CD4-positive, alpha-beta memory T cell (primary cell): ENCODE measurements at regions of chr7 and their contacts with region 1.

Region 1: DNA sequence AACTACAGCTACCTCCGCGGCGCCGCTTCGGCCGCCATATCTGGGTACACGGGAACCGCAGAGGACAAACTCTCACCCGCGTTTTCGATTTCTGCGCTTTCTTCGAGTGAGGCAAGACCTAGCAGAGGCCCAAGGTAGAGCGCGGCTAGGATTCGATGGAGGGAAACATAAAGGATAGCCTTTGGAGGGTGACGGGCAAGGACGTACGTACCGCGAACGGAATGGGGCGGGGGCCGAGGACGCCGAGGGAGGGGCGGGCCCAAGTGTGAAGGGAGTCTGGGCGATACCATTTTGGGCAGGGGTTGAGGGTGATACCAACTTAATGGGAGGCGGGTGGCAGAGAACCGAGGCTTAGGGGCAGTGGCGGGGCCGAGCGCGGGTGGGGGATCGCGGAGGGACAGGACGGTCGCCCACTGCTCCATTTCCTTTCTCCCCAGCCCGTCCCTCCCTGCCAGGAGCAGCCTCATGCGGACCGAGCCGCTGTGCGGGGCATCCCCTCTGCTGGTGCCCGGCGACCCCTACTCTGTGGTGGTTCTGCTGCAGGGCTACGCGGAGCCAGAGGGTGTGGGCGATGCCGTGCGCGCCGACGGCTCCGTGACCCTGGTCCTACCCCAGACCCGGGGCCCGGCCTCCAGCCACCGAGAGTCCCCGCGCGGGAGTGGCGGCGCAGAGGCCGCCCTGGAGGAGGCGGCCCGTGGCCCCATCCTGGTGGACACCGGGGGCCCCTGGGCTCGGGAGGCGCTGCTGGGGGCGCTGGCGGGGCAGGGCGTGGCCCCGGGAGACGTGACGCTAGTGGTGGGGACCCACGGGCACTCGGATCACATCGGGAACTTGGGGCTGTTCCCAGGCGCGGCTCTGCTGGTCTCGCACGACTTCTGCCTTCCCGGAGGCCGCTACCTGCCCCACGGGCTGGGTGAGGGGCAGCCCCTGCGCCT is at the start of gene MBLAC1:
- DNase-seq: peak; percentile 92 to 94 (median 93)
- H3K4me3 ChIP-seq: peak within 1 kb of the TSS; percentile 94 to 98
- H3K4me3 Mint-ChIP-seq: peak within 1 kb of the TSS; percentile 96 to 100 (median 99)
- H3K27ac ChIP-seq: peak within 1 kb of the TSS; percentile 87
- H3K27ac Mint-ChIP-seq: peak within 1 kb of the TSS; percentile 98 to 100 (median 100)
- H3K4me1 ChIP-seq: peaks cover 43% of the 10 kb centered on the region
- H3K4me1 Mint-ChIP-seq: peaks cover 20 to 46% (median 26%) of the 10 kb centered on the region in 4 donors
- H3K27me3 ChIP-seq: no peaks in the 10 kb centered on the region
- H3K27me3 Mint-ChIP-seq: no peaks in the 10 kb centered on the region
- total RNA-seq, gene MBLAC1: 6.4 to 6.8 TPM

Region 2: DNA sequence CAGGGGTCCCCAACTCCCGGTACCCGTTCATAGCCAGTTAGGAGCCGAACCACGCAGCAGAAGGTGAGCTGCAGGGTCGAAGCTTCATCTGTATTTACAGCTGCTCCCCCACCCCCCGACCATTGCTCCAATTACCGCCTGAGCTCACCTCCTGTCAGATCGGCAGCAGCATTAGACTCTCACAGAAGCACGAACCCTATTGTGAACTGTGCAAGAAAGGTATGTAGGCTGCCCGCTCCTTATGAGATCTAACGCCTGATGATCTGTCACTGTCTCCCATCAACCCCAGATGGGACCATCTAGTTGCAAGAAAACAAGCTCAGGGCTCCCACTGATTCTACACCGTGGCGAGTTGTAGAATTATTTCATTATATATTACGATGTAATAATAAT is 136.7 kb before region 1 on chr7:
- CTCF ChIA-PET with region 1: interaction called, 56 read pairs
- POLR2A ChIA-PET with region 1: interaction called, 4 read pairs
- intact Hi-C with region 1: no loop called
- DNase-seq: peak in 1 of 5 donors; percentile 2
- H3K4me3 ChIP-seq: no peak overlapping the region
- H3K4me3 Mint-ChIP-seq: no peak overlapping the region
- H3K27ac ChIP-seq: no peak overlapping the region
- H3K27ac Mint-ChIP-seq: no peak overlapping the region
- H3K4me1 ChIP-seq: peaks cover 3% of the 10 kb centered on the region
- H3K4me1 Mint-ChIP-seq: peaks cover 0 to 6% (median 4%) of the 10 kb centered on the region in 4 donors
- H3K27me3 ChIP-seq: no peaks in the 10 kb centered on the region
- H3K27me3 Mint-ChIP-seq: peaks cover 2 to 5% of the 10 kb centered on the region in 2 donors

Region 3: DNA sequence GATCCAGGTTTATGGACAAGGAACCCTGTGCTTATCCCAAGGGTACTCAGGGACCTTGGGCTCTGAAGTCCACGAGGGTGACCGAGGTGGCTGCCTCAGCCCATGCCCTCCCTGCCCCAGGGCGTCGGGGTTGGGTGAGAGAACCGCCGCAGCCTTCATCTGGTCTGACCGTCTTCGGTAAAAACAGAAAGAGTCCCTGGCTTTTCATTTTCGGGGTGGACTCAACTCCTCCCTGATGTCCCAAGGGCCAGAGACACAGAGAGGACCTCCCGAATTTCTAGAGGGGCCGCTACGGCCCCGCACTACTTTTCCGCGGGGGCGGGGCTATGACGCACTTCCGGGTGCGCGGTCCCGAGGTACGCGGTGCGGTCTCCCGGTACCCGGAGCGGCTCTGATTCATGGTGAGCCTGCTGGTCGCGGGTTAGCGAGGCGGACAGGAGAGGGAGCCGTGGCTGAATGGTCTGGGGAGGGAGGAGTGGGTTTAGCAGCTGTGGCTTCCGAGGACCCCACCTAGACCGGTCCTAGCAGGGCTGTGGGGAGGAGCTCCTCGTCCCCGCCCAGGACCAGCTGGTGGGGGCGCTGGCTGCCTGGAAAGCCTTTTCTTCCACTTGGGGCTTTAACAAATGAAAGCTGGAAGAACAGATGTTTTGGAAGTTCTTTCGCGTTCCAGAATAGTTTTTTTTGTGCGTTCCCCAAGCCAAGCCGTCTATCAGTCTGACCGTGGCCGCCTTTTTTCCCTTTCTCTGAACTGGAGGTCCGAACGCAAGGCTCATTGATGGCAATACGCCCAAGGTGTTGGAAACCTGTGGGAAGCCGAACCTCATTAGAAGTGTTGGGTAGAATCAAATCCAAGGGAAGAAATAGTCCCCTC is 77.5 kb before region 1 on chr7 and contains the start of gene ZSCAN21:
- CTCF ChIA-PET with region 1: interaction called, 7 read pairs
- POLR2A ChIA-PET with region 1: no interaction called
- intact Hi-C with region 1: loop called (anchors 2 kb)
- DNase-seq: peak; percentile 76 to 82 (median 77)
- H3K4me3 ChIP-seq: peak within 1 kb of the TSS; percentile 67 to 94
- H3K4me3 Mint-ChIP-seq: peak within 1 kb of the TSS; percentile 91 to 97 (median 94)
- H3K27ac ChIP-seq: peak within 1 kb of the TSS; percentile 83
- H3K27ac Mint-ChIP-seq: peak within 1 kb of the TSS; percentile 91 to 98 (median 97)
- H3K4me1 ChIP-seq: peaks cover 13% of the 10 kb centered on the region
- H3K4me1 Mint-ChIP-seq: peaks cover 11 to 28% (median 18%) of the 10 kb centered on the region in 4 donors
- H3K27me3 ChIP-seq: no peaks in the 10 kb centered on the region
- H3K27me3 Mint-ChIP-seq: no peaks in the 10 kb centered on the region
- total RNA-seq, gene ZSCAN21: 9.9 to 10.6 TPM

Region 4: GRCh38 chr7:100065452-100066186 is 61.6 kb before region 1 on chr7:
- CTCF ChIA-PET with region 1: no interaction called
- POLR2A ChIA-PET with region 1: no interaction called
- intact Hi-C with region 1: no loop called
- DNase-seq: no peak
- H3K4me3 ChIP-seq: no peak overlapping the region
- H3K4me3 Mint-ChIP-seq: no peak overlapping the region
- H3K27ac ChIP-seq: no peak overlapping the region
- H3K27ac Mint-ChIP-seq: no peak overlapping the region
- H3K4me1 ChIP-seq: no peaks in the 10 kb centered on the region
- H3K4me1 Mint-ChIP-seq: peaks cover 0 to 2% (median 0%) of the 10 kb centered on the region in 4 donors
- H3K27me3 ChIP-seq: no peaks in the 10 kb centered on the region
- H3K27me3 Mint-ChIP-seq: no peaks in the 10 kb centered on the region

Region 5: DNA sequence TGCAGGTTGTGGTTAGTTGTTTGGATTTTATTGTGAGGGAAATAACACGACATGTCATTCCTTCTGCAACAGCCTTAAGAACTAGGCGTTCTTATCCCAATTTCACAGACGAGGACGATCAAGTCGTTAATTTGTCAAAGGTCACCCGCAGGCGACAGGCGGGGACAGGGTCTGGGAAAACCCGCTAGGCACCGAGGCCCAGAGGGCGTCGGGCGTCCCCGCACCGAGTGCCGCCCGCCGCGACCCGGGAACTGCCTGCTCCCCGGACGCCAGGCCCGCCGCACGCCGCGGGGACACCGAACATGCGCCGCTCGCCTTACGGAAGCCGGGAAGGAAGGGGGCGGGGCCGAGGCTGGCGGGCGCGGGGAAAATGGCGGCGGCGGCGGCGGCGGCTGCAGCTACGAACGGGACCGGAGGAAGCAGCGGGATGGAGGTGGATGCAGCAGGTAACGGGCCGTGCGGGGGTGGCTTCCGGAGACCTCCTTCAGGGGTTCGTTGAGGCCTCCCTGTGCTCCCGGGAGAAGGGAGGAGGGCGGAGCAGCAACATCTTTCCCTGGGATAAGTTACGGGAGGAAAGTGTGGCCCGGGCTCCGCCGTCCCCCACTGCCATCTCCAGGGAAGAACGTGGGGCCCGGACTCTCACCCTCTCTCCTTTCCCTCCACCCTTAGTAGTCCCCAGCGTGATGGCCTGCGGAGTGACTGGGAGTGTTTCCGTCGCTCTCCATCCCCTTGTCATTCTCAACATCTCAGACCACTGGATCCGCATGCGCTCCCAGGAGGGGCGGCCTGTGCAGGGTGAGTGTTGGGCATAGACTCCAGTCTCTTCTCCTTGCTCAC is 38.4 kb before region 1 on chr7 and contains the start of gene COPS6:
- CTCF ChIA-PET with region 1: interaction called, 5 read pairs
- POLR2A ChIA-PET with region 1: interaction called, 12 read pairs
- intact Hi-C with region 1: no loop called
- DNase-seq: peak; percentile 83 to 91 (median 85)
- H3K4me3 ChIP-seq: peak within 1 kb of the TSS; percentile 57 to 82
- H3K4me3 Mint-ChIP-seq: peak within 1 kb of the TSS; percentile 86 to 94 (median 91)
- H3K27ac ChIP-seq: peak within 1 kb of the TSS; percentile 76
- H3K27ac Mint-ChIP-seq: peak within 1 kb of the TSS; percentile 90 to 97 (median 95)
- H3K4me1 ChIP-seq: peaks cover 16% of the 10 kb centered on the region
- H3K4me1 Mint-ChIP-seq: peaks cover 15 to 35% (median 27%) of the 10 kb centered on the region in 4 donors
- H3K27me3 ChIP-seq: no peaks in the 10 kb centered on the region
- H3K27me3 Mint-ChIP-seq: no peaks in the 10 kb centered on the region
- total RNA-seq, gene COPS6: 85.5 to 89.2 TPM

Region 6: DNA sequence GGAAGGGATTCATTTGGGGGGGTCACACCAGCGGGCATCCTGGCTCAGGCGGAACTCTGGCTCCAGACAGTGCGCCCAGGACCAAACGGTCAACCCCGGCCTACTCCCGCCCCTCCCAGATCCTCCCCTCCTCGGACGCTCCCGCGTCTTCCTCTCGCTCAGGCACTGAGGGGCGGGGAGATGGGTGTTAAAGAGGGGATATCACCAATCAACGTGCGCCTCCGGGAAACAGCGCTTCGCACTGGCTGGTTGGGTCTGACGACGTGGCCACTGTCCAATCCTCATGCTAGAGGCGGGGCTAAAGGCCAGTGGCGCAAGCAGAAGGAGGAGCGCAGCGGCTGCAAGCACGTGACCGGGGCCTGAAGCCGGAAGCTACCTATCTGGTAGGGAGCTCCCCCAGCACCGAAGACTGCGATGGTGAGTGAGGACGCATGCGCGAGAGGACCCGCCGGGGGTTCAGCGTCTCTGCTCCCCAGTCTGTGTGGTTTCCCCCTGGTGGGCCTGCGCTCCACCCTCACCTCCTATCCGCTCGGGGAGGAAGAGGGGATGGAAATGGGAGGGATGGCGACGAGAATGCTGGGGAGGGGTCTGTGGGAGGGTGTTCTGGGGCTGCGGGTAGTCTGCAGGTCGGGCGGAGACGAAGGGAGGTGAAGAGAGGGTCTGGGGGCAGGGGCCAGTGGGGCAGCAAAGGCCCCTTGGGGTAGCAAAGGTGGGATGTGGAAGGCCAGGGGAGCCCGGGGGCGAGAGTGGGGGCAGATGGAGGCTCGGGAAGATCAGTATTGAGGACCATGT is 21.6 kb after region 1 on chr7 and contains the start of gene LAMTOR4:
- CTCF ChIA-PET with region 1: interaction called, 25 read pairs
- POLR2A ChIA-PET with region 1: interaction called, 21 read pairs
- intact Hi-C with region 1: no loop called
- DNase-seq: peak; percentile 94 to 99 (median 99)
- H3K4me3 ChIP-seq: peak within 1 kb of the TSS; percentile 83 to 93
- H3K4me3 Mint-ChIP-seq: peak within 1 kb of the TSS; percentile 88 to 99 (median 94)
- H3K27ac ChIP-seq: peak within 1 kb of the TSS; percentile 92
- H3K27ac Mint-ChIP-seq: peak within 1 kb of the TSS; percentile 95 to 99 (median 97)
- H3K4me1 ChIP-seq: peaks cover 45% of the 10 kb centered on the region
- H3K4me1 Mint-ChIP-seq: peaks cover 18 to 45% (median 31%) of the 10 kb centered on the region in 4 donors
- H3K27me3 ChIP-seq: no peaks in the 10 kb centered on the region
- H3K27me3 Mint-ChIP-seq: no peaks in the 10 kb centered on the region
- total RNA-seq, gene LAMTOR4: 178 to 189 TPM

Region 7: GRCh38 chr7:100520138-100520537 is 392.9 kb after region 1 on chr7:
- CTCF ChIA-PET with region 1: no interaction called
- POLR2A ChIA-PET with region 1: no interaction called
- intact Hi-C with region 1: no loop called
- DNase-seq: no peak
- H3K4me3 ChIP-seq: no peak overlapping the region
- H3K4me3 Mint-ChIP-seq: no peak overlapping the region
- H3K27ac ChIP-seq: no peak overlapping the region
- H3K27ac Mint-ChIP-seq: peak overlapping the region in 3 of 7 donors; percentile 22 to 74 (median 63)
- H3K4me1 ChIP-seq: peaks cover 27% of the 10 kb centered on the region
- H3K4me1 Mint-ChIP-seq: peaks cover 17 to 32% (median 24%) of the 10 kb centered on the region in 4 donors
- H3K27me3 ChIP-seq: no peaks in the 10 kb centered on the region
- H3K27me3 Mint-ChIP-seq: no peaks in the 10 kb centered on the region

Region 8: GRCh38 chr7:100626530-100627237 is 499.5 kb after region 1 on chr7:
- CTCF ChIA-PET with region 1: no interaction called
- POLR2A ChIA-PET with region 1: no interaction called
- intact Hi-C with region 1: no loop called
- DNase-seq: peak; percentile 79 to 91 (median 82)
- H3K4me3 ChIP-seq: peak overlapping the region; percentile 36 to 67
- H3K4me3 Mint-ChIP-seq: peak overlapping the region; percentile 61 to 83 (median 76)
- H3K27ac ChIP-seq: peak overlapping the region; percentile 63
- H3K27ac Mint-ChIP-seq: peak overlapping the region; percentile 45 to 94 (median 83)
- H3K4me1 ChIP-seq: peaks cover 24% of the 10 kb centered on the region
- H3K4me1 Mint-ChIP-seq: peaks cover 15 to 41% (median 28%) of the 10 kb centered on the region in 4 donors
- H3K27me3 ChIP-seq: no peaks in the 10 kb centered on the region
- H3K27me3 Mint-ChIP-seq: no peaks in the 10 kb centered on the region

Region 9: GRCh38 chr7:101772513-101773211 is 1645.5 kb after region 1 on chr7:
- CTCF ChIA-PET with region 1: no interaction called
- POLR2A ChIA-PET with region 1: no interaction called
- intact Hi-C with region 1: no loop called
- DNase-seq: no peak
- H3K4me3 ChIP-seq: no peak overlapping the region
- H3K4me3 Mint-ChIP-seq: no peak overlapping the region
- H3K27ac ChIP-seq: no peak overlapping the region
- H3K27ac Mint-ChIP-seq: peak overlapping the region in 2 of 7 donors; percentile 11 to 50
- H3K4me1 ChIP-seq: no peaks in the 10 kb centered on the region
- H3K4me1 Mint-ChIP-seq: no peaks in the 10 kb centered on the region
- H3K27me3 ChIP-seq: no peaks in the 10 kb centered on the region
- H3K27me3 Mint-ChIP-seq: peaks cover 2 to 11% of the 10 kb centered on the region in 2 donors